ENCODE measurements at regions of chr10 and their contacts with region 1.

Region 1: GRCh38 chr10:110336111-110336721 is 31.5 kb upstream of the SMNDC1 start:
- DNase-seq: no peak
- H3K4me3 Mint-ChIP-seq: no peak overlapping the region
- H3K27ac Mint-ChIP-seq: peak overlapping the region; percentile 71
- H3K4me1 Mint-ChIP-seq: peaks cover 29% of the 10 kb centered on the region
- H3K27me3 Mint-ChIP-seq: peaks cover 3% of the 10 kb centered on the region

Region 2: DNA sequence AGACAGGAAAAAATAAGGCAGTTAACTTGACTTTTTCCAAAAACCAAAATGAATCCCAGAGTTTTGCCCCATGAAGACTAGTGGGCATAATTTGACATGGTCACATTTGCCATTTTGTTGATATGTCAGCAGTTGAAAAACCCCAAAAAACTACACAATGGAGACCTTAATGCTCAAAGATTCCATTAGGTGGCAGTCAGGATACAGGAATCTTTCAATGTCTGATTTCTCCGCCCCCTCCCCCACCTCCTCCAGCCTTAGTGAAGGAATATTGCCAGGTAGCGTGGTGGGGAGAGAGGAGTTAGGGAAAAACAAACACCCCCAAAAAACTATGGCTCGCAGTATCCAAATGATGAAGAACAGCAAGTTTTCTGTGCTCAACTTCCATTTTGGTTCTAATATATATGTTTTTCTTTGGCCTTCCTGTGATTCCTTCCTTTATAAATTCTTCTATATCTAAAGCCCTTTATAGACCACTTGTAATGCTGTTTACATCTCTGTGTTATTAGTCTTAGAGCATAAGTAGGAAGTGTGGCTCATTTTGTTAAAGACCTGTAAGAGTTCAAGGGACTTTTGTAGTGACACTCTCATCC is 24.8 kb before region 1 on chr10:
- CTCF ChIA-PET with region 1: interaction called, 6 read pairs
- POLR2A ChIA-PET with region 1: interaction called, 10 read pairs
- DNase-seq: peak; percentile 44
- H3K4me3 Mint-ChIP-seq: no peak overlapping the region
- H3K27ac Mint-ChIP-seq: no peak overlapping the region
- H3K4me1 Mint-ChIP-seq: peaks cover 16% of the 10 kb centered on the region
- H3K27me3 Mint-ChIP-seq: peaks cover 13% of the 10 kb centered on the region